Naive thymus-derived CD4-positive, alpha-beta T cell (primary cell): ENCODE measurements at regions of chr15 and their contacts with region 1.

Region 1: GRCh38 chr15:63600616-63601025 is 3.4 kb downstream of the FBXL22 start:
- DNase-seq: peak; percentile 85 to 95 (median 90)
- ATAC-seq: peak; percentile 93
- H3K4me3 ChIP-seq: peak overlapping the region; percentile 95
- H3K4me3 Mint-ChIP-seq: peak overlapping the region; percentile 91 to 99 (median 94)
- H3K27ac ChIP-seq: peak overlapping the region; percentile 80
- H3K27ac Mint-ChIP-seq: peak overlapping the region; percentile 90 to 96 (median 93)
- H3K4me1 ChIP-seq: peaks cover 22 to 27% of the 10 kb centered on the region in 2 donors
- H3K4me1 Mint-ChIP-seq: peaks cover 39 to 70% (median 66%) of the 10 kb centered on the region in 7 donors
- H3K27me3 ChIP-seq: no peaks in the 10 kb centered on the region
- H3K27me3 Mint-ChIP-seq: no peaks in the 10 kb centered on the region

Region 2: GRCh38 chr15:63122002-63122893 is 478.4 kb before region 1 on chr15:
- CTCF ChIA-PET with region 1: no interaction called
- POLR2A ChIA-PET with region 1: no interaction called
- intact Hi-C with region 1: loop called in 1 of 2 experiments (anchors 2 kb)
- DNase-seq: peak; percentile 38 to 91 (median 57)
- ATAC-seq: peak; percentile 95
- H3K4me3 ChIP-seq: peak overlapping the region; percentile 75
- H3K4me3 Mint-ChIP-seq: peak overlapping the region; percentile 80 to 95 (median 92)
- H3K27ac ChIP-seq: peak overlapping the region; percentile 80
- H3K27ac Mint-ChIP-seq: peak overlapping the region; percentile 54 to 95 (median 79)
- H3K4me1 ChIP-seq: peaks cover 4 to 8% of the 10 kb centered on the region in 2 donors
- H3K4me1 Mint-ChIP-seq: peaks cover 9 to 29% (median 18%) of the 10 kb centered on the region in 7 donors
- H3K27me3 ChIP-seq: no peaks in the 10 kb centered on the region
- H3K27me3 Mint-ChIP-seq: no peaks in the 10 kb centered on the region

Region 3: DNA sequence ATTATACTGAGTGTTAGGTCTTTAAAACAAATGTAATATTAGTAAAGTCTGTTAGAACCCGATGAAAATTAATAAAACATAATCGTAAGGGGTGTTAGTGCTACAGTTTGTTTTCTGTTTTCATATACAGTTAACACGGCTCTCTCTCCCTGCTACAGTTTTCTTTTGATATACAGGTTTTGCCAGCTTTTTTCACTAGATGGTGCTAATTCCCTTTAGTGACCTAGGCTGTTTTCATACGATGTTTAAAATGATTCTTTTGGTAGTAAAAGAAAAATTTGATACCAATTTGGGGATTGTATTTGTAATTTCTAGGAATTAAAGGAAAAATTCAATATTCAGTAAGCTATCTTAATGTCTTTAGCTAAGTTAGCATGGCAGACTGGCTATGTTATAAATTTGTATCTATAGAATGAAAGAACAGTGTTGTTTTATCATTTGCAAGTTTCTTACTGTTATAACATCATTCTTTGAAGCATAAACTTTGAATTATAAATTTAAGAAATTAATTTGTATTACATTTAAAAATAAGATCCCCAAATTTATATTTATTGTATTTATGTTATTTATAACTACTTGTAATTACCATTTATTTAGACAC is 311.7 kb before region 1 on chr15:
- CTCF ChIA-PET with region 1: no interaction called
- POLR2A ChIA-PET with region 1: interaction called, 3 read pairs
- intact Hi-C with region 1: loop called (anchors 2 to 10 kb)
- DNase-seq: peak in 7 of 9 donors; percentile 30 to 68 (median 52)
- ATAC-seq: peak; percentile 79
- H3K4me3 ChIP-seq: no peak overlapping the region
- H3K4me3 Mint-ChIP-seq: peak overlapping the region in 1 of 10 donors; percentile 6
- H3K27ac ChIP-seq: no peak overlapping the region
- H3K27ac Mint-ChIP-seq: peak overlapping the region in 4 of 9 donors; percentile 12 to 64 (median 59)
- H3K4me1 ChIP-seq: no peaks in the 10 kb centered on the region
- H3K4me1 Mint-ChIP-seq: peaks cover 5 to 10% (median 7%) of the 10 kb centered on the region in 7 donors
- H3K27me3 ChIP-seq: no peaks in the 10 kb centered on the region
- H3K27me3 Mint-ChIP-seq: no peaks in the 10 kb centered on the region

Region 4: DNA sequence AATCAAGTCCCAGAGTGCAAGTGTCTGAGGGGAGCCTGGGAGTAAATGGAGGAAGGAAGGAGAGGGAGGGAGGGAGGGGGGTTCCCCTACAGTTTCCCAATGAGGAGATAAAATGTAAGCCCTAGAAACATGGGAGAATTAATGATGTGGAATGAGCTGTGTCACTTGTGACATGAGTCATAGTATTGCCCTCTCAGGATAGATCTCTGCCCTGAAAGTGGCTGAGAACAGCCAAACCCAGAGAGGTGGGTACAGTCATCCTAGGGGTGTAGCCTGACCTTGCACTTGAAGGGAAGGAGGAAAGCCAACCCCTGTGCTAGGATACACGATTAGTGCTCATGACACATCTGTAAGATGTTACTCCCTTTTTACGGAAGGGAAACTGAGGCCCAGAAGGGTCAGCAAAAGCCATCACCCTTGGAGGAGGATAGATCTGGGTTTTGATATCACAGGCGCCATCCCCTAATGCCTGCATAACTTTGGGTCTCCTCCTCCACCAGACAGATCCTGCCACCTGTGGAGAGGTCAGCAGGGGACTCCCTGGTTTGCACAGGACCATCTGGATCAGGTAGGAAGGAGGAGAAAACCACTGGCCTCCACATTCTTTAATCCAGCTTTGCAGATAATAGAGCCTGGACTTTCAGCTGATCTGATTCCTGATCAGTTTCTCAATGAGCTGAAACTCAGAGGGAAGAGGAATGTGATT is 119.4 kb before region 1 on chr15:
- CTCF ChIA-PET with region 1: interaction called, 4 read pairs
- POLR2A ChIA-PET with region 1: interaction called, 12 read pairs
- intact Hi-C with region 1: loop called (anchors 1 to 5 kb)
- DNase-seq: no peak
- ATAC-seq: peak; percentile 18
- H3K4me3 ChIP-seq: peak overlapping the region; percentile 18
- H3K4me3 Mint-ChIP-seq: peak overlapping the region in 7 of 10 donors; percentile 42 to 90 (median 78)
- H3K27ac ChIP-seq: peak overlapping the region; percentile 96
- H3K27ac Mint-ChIP-seq: peak overlapping the region; percentile 99 to 100 (median 99)
- H3K4me1 ChIP-seq: peaks cover 54 to 81% of the 10 kb centered on the region in 2 donors
- H3K4me1 Mint-ChIP-seq: peaks cover 46 to 91% (median 80%) of the 10 kb centered on the region in 7 donors
- H3K27me3 ChIP-seq: no peaks in the 10 kb centered on the region
- H3K27me3 Mint-ChIP-seq: no peaks in the 10 kb centered on the region

Region 5: DNA sequence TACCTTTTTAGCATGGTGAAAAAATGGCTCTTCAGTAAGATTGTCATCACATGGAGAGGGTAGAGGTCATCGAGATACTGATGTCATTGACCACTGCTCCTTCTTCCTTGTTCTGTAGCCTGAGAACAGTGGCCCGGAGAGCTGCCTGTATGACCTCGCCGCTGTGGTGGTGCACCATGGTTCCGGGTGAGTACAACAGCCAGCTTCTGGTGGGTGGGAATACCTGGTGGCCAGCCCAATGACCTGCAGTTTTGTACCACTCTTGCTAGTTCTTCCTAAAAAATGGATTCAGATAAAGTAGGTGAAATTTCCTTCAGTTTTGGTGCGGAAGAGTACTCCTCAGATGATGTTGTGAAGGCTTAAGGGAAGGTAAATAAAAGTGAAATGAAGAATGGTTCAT is 11.8 kb before region 1 on chr15:
- CTCF ChIA-PET with region 1: interaction called, 5 read pairs
- POLR2A ChIA-PET with region 1: interaction called, 19 read pairs
- intact Hi-C with region 1: loop called in 1 of 2 experiments (anchors 1 kb)
- DNase-seq: no peak
- ATAC-seq: no peak
- H3K4me3 ChIP-seq: no peak overlapping the region
- H3K4me3 Mint-ChIP-seq: no peak overlapping the region
- H3K27ac ChIP-seq: no peak overlapping the region
- H3K27ac Mint-ChIP-seq: peak overlapping the region in 3 of 9 donors; percentile 17 to 73 (median 27)
- H3K4me1 ChIP-seq: peaks cover 0 to 3% of the 10 kb centered on the region in 2 donors
- H3K4me1 Mint-ChIP-seq: peaks cover 10 to 60% (median 32%) of the 10 kb centered on the region in 7 donors
- H3K27me3 ChIP-seq: no peaks in the 10 kb centered on the region
- H3K27me3 Mint-ChIP-seq: no peaks in the 10 kb centered on the region

Region 6: DNA sequence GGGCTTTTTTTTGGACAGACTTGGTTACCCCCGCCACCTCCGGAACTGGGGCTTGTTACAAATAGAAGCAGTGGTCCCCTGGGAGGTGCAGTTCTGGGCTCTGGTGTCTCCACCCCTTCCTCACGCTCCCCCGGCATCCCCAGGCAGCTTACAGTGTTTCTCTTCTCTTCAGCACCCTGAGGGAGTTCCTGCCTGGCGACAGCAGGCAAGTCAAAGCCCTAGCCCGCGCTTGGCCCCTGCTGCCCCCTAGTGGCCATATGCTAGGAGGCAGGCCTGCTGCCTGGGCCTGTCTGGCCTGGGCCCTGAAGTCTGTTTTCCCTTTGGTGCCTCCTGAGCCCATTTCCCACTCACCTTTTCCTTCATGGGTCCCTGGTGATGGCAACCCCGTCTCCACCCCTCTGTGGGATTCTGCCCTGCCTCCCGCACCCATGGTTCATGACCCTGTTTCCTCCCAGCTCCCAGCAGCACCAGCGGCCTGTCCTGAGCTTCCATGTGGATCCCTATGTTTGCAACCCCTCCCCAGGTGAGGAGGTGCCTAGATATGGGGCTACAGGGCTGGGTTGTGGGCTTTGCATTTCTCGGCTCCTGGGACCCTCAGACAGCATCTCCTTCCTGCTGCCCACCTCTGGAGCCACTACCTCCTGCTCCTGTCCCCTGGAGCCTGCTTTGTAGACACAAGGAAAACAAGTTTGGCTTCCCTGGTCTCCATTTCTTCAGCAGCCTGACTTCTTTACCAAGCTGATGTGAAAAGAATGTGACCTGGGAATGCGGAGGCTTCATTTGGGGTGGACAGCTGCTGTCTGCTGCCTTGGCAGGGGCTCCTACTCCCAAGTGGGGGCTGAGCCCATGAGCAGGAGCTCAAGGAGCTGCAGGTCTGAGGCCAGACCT is 553.1 kb after region 1 on chr15:
- CTCF ChIA-PET with region 1: no interaction called
- POLR2A ChIA-PET with region 1: no interaction called
- intact Hi-C with region 1: loop called in 1 of 2 experiments (anchors 10 kb)
- DNase-seq: peak; percentile 77 to 96 (median 88)
- ATAC-seq: peak; percentile 97
- H3K4me3 ChIP-seq: peak overlapping the region; percentile 34
- H3K4me3 Mint-ChIP-seq: peak overlapping the region; percentile 60 to 85 (median 79)
- H3K27ac ChIP-seq: peak overlapping the region; percentile 25
- H3K27ac Mint-ChIP-seq: peak overlapping the region in 6 of 9 donors; percentile 14 to 74 (median 31)
- H3K4me1 ChIP-seq: peaks cover 10 to 21% of the 10 kb centered on the region in 2 donors
- H3K4me1 Mint-ChIP-seq: peaks cover 30 to 48% (median 39%) of the 10 kb centered on the region in 7 donors
- H3K27me3 ChIP-seq: peaks cover 0 to 4% of the 10 kb centered on the region in 2 donors
- H3K27me3 Mint-ChIP-seq: peaks cover 0 to 16% (median 8%) of the 10 kb centered on the region in 5 donors